ENCODE measurements at regions of chr15 and their contacts with region 1.

Region 1: DNA sequence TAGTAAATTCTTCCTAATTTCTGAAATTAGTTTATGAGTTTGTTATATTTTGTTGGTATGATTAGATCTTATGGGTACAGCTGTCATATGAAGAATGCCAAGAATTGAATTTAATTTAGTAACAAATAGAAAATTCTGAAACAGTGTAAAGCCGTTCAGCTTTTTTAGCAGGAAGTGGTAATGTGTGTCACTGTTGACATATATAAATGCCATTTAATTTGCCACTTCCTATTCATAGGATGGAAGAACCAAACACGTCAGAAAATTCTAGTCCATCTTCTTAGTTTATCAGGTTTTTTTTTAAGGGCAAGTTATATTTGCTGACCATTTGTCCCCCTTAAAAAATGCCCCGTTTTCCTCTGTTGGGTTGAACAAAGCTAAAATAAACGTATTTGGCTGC is 43.0 kb downstream of the RAB8B start:
- DNase-seq: no peak
- ATAC-seq: peak; percentile 48; the same call in 2 of the 3 replicates
- H3K4me3 ChIP-seq: no peak overlapping the region
- H3K27ac ChIP-seq: no peak overlapping the region
- H3K4me1 ChIP-seq: peaks cover 19% of the 10 kb centered on the region
- H3K27me3 ChIP-seq: no peaks in the 10 kb centered on the region
- CTCF ChIP-seq: no peak
- EP300 ChIP-seq: no peak
- POLR2A ChIP-seq: no peak
- RAD21 ChIP-seq: no peak

Region 2: GRCh38 chr15:63218100-63218808 is 14.2 kb before region 1 on chr15:
- CTCF ChIA-PET with region 1: interaction called, 12 read pairs
- POLR2A ChIA-PET with region 1: interaction called, 16 read pairs
- RAD21 ChIA-PET with region 1: interaction called, 8 read pairs
- SMC1A ChIA-PET with region 1: interaction called, 28 read pairs
- in situ Hi-C with region 1: no loop called
- intact Hi-C with region 1: no loop called
- DNase-seq: no peak
- ATAC-seq: no peak
- H3K4me3 ChIP-seq: no peak overlapping the region
- H3K27ac ChIP-seq: no peak overlapping the region
- H3K4me1 ChIP-seq: peaks cover 20% of the 10 kb centered on the region
- H3K27me3 ChIP-seq: no peaks in the 10 kb centered on the region
- CTCF ChIP-seq: no peak
- EP300 ChIP-seq: no peak
- POLR2A ChIP-seq: no peak
- RAD21 ChIP-seq: no peak

Measured in GM12878 (cell line).